ENCODE measurements at regions of chrX and their contacts with region 1.

Region 1: DNA sequence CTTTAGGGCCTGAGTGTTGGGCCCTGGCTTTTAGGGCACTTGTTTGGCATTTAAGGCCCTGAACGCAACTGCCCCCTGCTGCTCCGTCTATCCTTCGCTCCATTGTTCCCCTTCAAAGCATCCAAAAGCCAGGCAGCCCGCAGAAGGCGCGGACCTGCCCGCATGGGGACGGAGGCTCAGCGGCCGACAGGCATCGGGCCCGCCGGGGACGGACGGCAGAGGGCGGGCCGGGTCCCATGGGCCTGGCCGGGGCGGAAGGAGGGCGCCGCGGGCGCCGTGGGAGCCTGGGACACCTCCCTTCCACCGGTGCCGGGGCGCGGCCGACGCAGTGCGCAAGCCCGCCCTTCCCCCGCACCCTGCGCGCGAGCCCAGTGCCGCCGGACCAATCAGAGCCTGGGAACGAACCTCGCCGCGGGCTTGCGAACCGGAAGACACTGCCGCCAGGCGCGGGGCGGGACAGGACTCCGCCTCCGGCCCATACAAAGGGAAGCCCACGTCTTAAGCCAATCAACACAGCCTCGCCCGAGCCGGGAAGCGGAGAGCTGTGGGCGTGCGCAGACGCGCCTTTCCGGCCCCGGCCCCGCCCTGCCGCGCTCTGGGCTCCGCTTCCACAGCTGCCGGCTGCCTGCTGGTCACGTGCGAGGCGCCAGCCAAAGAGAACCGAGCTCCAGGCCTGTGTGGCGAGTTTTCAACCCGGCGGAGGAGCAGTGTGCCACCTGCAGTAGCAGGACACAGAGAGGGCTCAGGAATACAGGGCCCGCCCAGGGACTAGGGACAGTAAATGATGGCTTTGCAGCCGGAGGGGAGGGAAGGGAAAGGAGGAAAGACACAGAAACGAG is 2.1 kb upstream of the ARHGAP4 start:
- DNase-seq: peak; percentile 95
- ATAC-seq: peak; percentile 76
- H3K4me3 Mint-ChIP-seq: peak overlapping the region; percentile 91
- H3K27ac Mint-ChIP-seq: peak overlapping the region; percentile 97
- H3K4me1 Mint-ChIP-seq: peaks cover 29% of the 10 kb centered on the region
- H3K27me3 Mint-ChIP-seq: no peaks in the 10 kb centered on the region

Region 2: DNA sequence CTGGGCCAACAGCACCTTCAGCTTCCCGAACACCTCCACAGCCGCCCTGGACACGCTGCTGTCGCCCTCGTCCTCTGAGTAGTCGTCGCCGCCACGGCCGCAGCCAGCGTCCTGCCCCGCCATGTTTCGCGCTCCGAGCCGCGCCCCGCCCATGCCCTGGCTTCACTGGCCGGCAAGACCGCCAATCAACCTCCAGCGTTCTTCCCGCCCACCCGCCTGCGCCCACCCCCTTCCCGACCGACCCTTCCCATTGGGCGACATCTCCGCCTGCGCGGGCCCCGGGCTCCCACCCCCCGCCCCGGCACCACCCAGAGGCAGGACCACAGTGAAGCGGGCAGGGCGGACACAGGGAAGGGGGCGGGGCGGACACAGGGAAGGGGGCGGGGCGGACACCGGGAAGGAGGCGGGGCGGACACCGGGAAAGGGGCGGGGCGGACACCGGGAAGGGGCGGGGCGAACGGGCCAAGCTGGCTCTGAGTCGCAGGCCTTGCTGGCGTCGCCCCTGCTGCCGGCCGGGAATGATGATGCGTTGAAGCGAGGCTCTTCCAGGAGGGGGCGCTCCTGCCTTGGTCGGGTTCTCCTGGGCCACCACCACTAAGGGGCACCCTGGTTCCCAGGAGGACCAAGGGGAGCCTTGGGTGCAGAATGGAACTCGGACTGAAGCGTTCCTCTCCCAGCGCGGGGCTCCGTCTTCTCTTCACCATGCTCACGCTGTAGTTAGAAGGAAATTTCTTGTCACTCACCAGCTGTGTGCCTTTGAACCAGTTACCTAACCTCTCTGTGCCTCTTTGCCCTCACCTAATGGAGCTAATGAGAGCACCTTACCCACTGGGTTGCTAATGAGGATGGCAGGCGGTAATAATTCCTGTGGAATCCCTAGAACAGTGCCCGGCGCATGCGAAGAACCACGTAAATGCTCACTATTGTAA is 457.4 kb before region 1 on chrX and contains the start of gene HAUS7:
- CTCF ChIA-PET with region 1: no interaction called
- POLR2A ChIA-PET with region 1: no interaction called
- intact Hi-C with region 1: loop called in 1 of 2 experiments (anchors 1 kb)
- DNase-seq: peak; percentile 93
- ATAC-seq: peak; percentile 91
- H3K4me3 Mint-ChIP-seq: peak within 1 kb of the TSS; percentile 78
- H3K27ac Mint-ChIP-seq: peak within 1 kb of the TSS; percentile 67
- H3K4me1 Mint-ChIP-seq: peaks cover 5% of the 10 kb centered on the region
- H3K27me3 Mint-ChIP-seq: no peaks in the 10 kb centered on the region
- total RNA-seq, gene HAUS7: 41.9 to 70.0 TPM

Region 3: GRCh38 chrX:153724252-153725040 is 203.7 kb before region 1 on chrX and contains the starts of genes ABCD1 and BCAP31:
- CTCF ChIA-PET with region 1: interaction called, 3 read pairs
- POLR2A ChIA-PET with region 1: no interaction called
- intact Hi-C with region 1: loop called in 1 of 2 experiments (anchors 1 kb)
- DNase-seq: peak; percentile 93
- ATAC-seq: peak; percentile 84
- H3K4me3 Mint-ChIP-seq: peak within 1 kb of the TSS; percentile 89
- H3K27ac Mint-ChIP-seq: peak within 1 kb of the TSS; percentile 87
- H3K4me1 Mint-ChIP-seq: peaks cover 20% of the 10 kb centered on the region
- H3K27me3 Mint-ChIP-seq: no peaks in the 10 kb centered on the region
- total RNA-seq, gene ABCD1: 4.5 to 4.8 TPM
- total RNA-seq, gene BCAP31: 78.0 to 106 TPM

Region 4: DNA sequence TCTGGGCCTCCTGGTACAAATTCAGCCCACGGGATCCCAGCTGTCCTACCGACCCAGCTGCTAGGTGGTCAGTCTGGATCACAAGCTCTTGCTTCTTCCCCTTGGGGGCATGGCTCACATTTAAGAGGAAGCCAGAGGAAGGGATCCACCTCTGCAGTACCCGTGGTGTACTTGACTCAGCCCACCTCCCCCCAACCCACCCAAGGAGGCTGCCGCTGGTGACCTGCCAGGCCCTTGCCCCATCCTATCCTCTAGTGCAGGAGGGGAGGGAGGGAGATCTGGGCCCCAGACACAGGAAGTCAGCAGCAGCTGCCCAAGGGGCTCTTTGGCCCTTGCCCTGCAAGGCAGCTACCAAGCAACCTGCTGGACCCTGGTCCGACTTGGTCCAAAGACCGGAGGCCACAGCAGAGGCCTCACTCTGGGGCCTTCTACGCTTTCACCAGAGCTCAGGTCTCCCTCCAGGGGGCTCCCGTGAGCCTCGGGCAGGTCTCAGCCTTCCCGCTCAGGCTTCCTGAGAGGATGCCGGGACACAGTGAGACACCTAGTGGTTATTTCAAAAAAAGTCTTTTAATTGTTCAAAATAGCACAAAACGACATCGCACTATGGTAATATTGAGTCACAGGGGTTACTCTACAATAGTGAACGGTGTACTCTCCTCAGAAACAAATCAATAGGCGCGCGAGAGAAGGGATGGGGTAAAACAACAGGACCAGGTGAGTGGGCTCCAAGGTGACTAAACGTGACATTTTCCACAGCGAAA is 19.0 kb after region 1 on chrX:
- CTCF ChIA-PET with region 1: interaction called, 19 read pairs
- POLR2A ChIA-PET with region 1: interaction called, 3 read pairs
- intact Hi-C with region 1: loop called (anchors 1 kb)
- DNase-seq: peak; percentile 89
- ATAC-seq: peak; percentile 87
- H3K4me3 Mint-ChIP-seq: no peak overlapping the region
- H3K27ac Mint-ChIP-seq: peak overlapping the region; percentile 87
- H3K4me1 Mint-ChIP-seq: peaks cover 14% of the 10 kb centered on the region
- H3K27me3 Mint-ChIP-seq: no peaks in the 10 kb centered on the region

Region 5: GRCh38 chrX:154019633-154020528 is 91.7 kb after region 1 on chrX and contains the start of gene IRAK1:
- CTCF ChIA-PET with region 1: no interaction called
- POLR2A ChIA-PET with region 1: no interaction called
- intact Hi-C with region 1: loop called in 1 of 2 experiments (anchors 5 kb)
- DNase-seq: peak; percentile 73
- ATAC-seq: peak; percentile 61
- H3K4me3 Mint-ChIP-seq: peak within 1 kb of the TSS; percentile 87
- H3K27ac Mint-ChIP-seq: peak within 1 kb of the TSS; percentile 90
- H3K4me1 Mint-ChIP-seq: peaks cover 14% of the 10 kb centered on the region
- H3K27me3 Mint-ChIP-seq: no peaks in the 10 kb centered on the region
- total RNA-seq, gene IRAK1: 84.3 to 93.6 TPM

Region 6: DNA sequence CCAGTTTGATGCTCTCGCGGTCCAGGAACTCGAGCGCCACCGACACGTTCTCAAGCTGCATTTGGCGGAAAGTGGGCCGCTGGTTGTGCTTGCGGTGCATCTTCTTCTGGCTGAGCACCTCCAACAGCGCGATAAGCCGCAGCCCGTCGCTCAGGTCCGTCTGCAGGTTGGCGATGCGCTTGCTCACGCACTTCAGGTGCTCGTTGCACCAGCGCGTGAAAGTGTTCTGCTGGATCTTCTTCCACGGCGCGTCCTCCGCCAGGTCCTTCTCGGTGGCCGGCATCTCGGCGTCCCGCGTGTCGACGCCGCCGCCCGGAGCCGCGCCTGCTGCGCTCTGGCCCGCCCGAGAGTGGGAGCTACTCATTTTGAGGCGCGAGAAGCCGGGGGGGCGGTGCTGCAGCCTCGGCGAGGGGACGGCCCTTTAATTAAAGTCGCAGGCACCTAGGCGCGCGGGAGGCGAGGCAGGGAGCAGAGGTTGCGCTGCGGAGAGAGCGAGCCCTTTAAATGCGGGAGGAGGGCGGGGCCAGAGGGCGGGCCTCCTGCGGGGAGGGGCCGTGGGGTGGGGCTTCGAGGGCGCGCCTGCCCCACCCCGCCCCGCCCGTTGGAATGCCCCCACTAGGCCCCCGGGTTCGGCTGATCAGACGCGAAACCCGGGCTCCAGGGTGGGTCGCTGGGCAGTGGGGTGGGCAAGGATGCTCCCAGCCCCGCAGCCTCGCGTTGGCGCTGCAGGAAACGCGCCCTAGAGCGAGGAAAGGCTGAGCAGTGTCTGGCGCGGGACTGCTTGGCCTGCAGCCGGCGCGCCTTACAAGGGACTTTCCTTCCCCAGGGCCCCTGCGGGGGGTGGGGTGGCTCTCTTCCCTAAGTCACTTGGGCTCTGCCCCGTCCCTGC is 443.0 kb after region 1 on chrX:
- CTCF ChIA-PET with region 1: interaction called, 3 read pairs
- POLR2A ChIA-PET with region 1: no interaction called
- intact Hi-C with region 1: loop called (anchors 1 to 10 kb)
- DNase-seq: peak; percentile 96
- ATAC-seq: peak; percentile 55
- H3K4me3 Mint-ChIP-seq: peak overlapping the region; percentile 86
- H3K27ac Mint-ChIP-seq: peak overlapping the region; percentile 55
- H3K4me1 Mint-ChIP-seq: peaks cover 22% of the 10 kb centered on the region
- H3K27me3 Mint-ChIP-seq: no peaks in the 10 kb centered on the region

Region 7: GRCh38 chrX:154547245-154548027 is 619.3 kb after region 1 on chrX and contains the start of gene IKBKG:
- CTCF ChIA-PET with region 1: no interaction called
- POLR2A ChIA-PET with region 1: no interaction called
- intact Hi-C with region 1: loop called in 1 of 2 experiments (anchors 1 kb)
- DNase-seq: peak; percentile 92
- ATAC-seq: peak; percentile 81
- H3K4me3 Mint-ChIP-seq: peak within 1 kb of the TSS; percentile 99
- H3K27ac Mint-ChIP-seq: peak within 1 kb of the TSS; percentile 97
- H3K4me1 Mint-ChIP-seq: peaks cover 39% of the 10 kb centered on the region
- H3K27me3 Mint-ChIP-seq: no peaks in the 10 kb centered on the region
- total RNA-seq, gene IKBKG: 32.7 to 33.0 TPM